ENCODE measurements at regions of chr1 and their contacts with region 1.

Region 1: DNA sequence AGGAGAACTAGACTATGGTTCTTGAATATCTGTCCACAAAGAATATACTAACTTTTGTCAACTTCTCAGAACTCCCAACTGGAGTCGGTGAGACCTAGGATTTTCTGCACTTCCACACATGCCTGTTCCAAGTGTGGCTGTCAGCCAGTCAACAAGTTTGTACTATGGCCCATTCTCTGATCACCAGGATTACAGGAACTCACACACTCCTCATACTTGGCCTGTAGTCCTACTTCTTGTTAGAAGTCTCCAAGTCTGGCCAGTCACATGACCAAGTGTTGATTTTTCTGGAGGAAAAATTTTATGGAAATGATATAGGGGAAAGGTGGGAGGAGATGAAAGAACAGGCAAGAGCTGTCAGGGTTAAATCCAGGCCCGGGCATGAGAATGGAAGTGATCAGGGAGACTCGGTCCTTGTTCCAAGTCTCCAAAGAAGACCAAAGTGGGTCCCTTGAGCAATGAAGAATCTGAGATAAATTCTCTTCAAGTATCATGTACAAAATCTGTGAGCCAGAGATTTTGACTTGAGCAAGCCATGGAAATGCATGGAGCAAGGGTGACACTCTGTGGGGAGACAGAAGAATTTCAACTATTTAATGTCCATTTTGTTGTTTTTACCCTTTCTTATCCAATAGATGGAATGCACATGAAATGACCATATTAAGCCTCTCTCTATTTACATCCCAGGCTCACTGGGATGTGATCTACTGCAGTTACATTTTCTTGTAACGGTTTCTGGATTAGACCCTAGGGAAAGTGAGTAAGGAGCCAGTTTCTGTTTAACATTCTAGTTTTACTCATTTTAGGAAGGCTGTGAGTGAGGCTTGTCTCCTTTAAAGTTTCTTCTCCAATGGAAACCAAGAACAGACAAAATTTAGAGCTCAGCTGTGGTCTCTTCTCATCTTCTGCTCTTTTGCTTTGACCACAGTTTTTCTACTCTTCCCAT is 320.9 kb downstream of the ASTN1 start:
- DNase-seq: peak; percentile 19 to 67 (median 34)
- ATAC-seq: peak; percentile 71
- H3K4me3 ChIP-seq: no peak overlapping the region
- H3K27ac ChIP-seq: no peak overlapping the region
- H3K4me1 ChIP-seq: peaks cover 0 to 10% of the 10 kb centered on the region in 2 experiments; a peak in 3 of 5 replicates
- H3K27me3 ChIP-seq: peaks cover 4 to 6% of the 10 kb centered on the region in 2 experiments; a peak in 3 of 5 replicates
- CTCF ChIP-seq: peak; percentile 54 to 87 (median 62); a peak in 5 of 6 replicates
- EP300 ChIP-seq: no peak
- POLR2A ChIP-seq: no peak
- RAD21 ChIP-seq: peak; percentile 94 to 95

Region 2: GRCh38 chr1:175644509-175644908 is 1199.1 kb before region 1 on chr1:
- CTCF ChIA-PET with region 1: no interaction called
- POLR2A ChIA-PET with region 1: no interaction called
- in situ Hi-C with region 1: no loop called
- intact Hi-C with region 1: no loop called
- DNase-seq: no peak
- ATAC-seq: no peak
- H3K4me3 ChIP-seq: no peak overlapping the region
- H3K27ac ChIP-seq: no peak overlapping the region
- H3K4me1 ChIP-seq: no peaks in the 10 kb centered on the region
- H3K27me3 ChIP-seq: peaks cover 2 to 5% of the 10 kb centered on the region in 2 experiments; a peak in 1 of 5 replicates
- CTCF ChIP-seq: no peak
- EP300 ChIP-seq: no peak
- POLR2A ChIP-seq: no peak
- RAD21 ChIP-seq: no peak

Region 3: DNA sequence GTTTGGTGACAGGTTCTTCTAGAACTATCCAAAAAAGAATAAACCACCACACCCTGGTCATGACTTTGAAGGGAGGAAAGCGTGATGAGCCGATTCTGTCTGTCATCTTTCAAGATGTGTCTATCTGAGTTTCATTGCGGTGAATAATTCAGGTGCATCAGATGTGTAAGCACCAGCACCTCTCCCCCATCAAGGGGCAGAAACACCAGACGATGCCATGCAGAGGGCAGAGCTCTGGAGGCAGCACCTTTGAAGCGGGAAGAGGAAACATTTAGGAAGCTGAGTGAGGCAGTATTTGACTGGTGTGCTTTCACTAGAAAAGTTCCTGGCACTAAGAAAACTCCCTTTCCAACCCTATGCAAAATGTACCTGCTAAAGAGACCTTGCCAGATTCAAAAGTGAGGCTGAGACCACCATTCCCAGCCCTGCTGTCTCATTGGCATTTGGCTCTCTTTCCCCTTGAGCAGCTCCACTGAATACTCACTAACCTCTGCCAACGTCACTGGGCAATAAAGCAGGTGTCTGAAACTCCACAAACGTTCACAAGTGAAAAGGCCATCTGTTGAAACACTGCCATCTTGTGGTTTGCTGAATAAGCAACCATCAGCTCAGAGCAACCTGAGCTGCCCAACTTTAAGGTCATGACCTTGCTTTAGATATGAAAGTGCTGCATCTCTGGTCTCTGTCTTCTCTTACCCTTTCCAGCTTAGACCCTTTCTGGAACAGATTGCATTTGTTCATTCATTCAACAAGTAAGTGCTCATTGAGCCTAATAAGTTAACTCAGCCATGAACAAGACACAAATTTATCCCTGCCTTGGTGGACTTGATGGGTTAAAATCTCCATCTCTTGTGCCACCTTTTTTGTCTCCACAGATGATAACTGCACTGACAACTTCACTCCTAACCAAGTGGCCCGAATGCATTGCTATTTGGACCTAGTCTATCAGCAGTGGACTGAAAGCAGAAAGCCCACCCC is 152.1 kb before region 1 on chr1:
- CTCF ChIA-PET with region 1: no interaction called
- POLR2A ChIA-PET with region 1: no interaction called
- in situ Hi-C with region 1: no loop called
- intact Hi-C with region 1: loop called (anchors 5 kb)
- DNase-seq: peak; percentile 35 to 76 (median 49)
- ATAC-seq: peak; percentile 91
- H3K4me3 ChIP-seq: no peak overlapping the region
- H3K27ac ChIP-seq: no peak overlapping the region
- H3K4me1 ChIP-seq: no peaks in the 10 kb centered on the region; a peak in 1 of 5 replicates
- H3K27me3 ChIP-seq: 0 out of 5 replicates have a peak, but pooled peaks cover 0 to 3% of the 10 kb centered on the region in 2 experiments
- CTCF ChIP-seq: peak; percentile 76 to 80 (median 80)
- EP300 ChIP-seq: no peak
- POLR2A ChIP-seq: no peak
- RAD21 ChIP-seq: peak; percentile 77 to 78

Region 4: DNA sequence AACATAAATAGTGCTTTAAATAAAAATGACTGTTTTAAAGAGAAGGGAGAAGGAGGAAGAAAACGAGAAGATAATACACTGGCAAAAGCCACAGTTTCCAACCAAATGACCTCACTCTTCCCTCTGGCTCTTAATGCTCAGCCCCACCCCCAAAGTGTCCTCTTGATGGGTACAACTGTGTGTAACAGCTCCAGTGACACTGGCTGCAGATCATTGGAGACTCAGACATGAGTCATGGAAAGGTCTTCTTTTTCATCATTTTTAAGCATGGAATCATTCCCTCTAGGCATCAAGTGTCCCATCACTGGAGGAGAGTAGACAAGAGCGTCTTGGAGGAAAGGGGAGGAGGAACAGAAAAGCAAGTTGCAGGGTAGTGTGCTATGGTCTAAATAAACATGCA is 47.7 kb before region 1 on chr1:
- CTCF ChIA-PET with region 1: no interaction called
- POLR2A ChIA-PET with region 1: no interaction called
- in situ Hi-C with region 1: no loop called
- intact Hi-C with region 1: no loop called
- DNase-seq: peak in 1 of 4 experiments; percentile 5
- ATAC-seq: peak; percentile 63
- H3K4me3 ChIP-seq: no peak overlapping the region
- H3K27ac ChIP-seq: no peak overlapping the region
- H3K4me1 ChIP-seq: no peaks in the 10 kb centered on the region
- H3K27me3 ChIP-seq: no peaks in the 10 kb centered on the region; a peak in 1 of 5 replicates
- CTCF ChIP-seq: no peak
- EP300 ChIP-seq: no peak
- POLR2A ChIP-seq: no peak
- RAD21 ChIP-seq: no peak

Measured in K562 (cell line).